ENCODE measurements at regions of chr1 and their contacts with region 1.

Region 1: DNA sequence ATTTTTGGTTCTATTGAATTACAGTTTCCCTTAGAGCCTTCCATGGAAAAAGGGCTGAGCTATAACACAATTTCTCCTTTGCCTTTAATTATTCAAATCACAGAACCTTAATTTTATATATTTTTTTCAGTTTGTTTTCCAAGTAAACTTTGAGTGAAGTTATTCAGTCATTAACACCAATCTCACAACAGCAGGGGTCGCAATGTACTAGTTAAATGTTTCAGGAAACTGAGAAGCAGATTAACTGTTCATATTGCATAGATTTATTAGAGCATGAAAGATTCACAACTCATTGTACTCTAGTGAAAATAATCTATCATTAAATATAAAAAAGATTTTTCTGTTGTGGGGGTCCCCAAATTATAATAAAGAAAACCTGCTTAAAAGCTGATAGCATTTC is 64.1 kb downstream of the KIFAP3 start:
- DNase-seq: peak in 3 of 4 experiments; percentile 9 to 73 (median 14)
- ATAC-seq: peak; percentile 53; the same call in 2 of the 3 replicates
- H3K4me3 ChIP-seq: no peak overlapping the region
- H3K27ac ChIP-seq: no peak overlapping the region
- H3K4me1 ChIP-seq: no peaks in the 10 kb centered on the region
- H3K27me3 ChIP-seq: no peaks in the 10 kb centered on the region
- CTCF ChIP-seq: peak in 2 of 3 experiments; percentile 30 to 72; a peak in 3 of 6 replicates
- EP300 ChIP-seq: no peak
- POLR2A ChIP-seq: no peak
- RAD21 ChIP-seq: peak; percentile 88 to 90

Region 2: DNA sequence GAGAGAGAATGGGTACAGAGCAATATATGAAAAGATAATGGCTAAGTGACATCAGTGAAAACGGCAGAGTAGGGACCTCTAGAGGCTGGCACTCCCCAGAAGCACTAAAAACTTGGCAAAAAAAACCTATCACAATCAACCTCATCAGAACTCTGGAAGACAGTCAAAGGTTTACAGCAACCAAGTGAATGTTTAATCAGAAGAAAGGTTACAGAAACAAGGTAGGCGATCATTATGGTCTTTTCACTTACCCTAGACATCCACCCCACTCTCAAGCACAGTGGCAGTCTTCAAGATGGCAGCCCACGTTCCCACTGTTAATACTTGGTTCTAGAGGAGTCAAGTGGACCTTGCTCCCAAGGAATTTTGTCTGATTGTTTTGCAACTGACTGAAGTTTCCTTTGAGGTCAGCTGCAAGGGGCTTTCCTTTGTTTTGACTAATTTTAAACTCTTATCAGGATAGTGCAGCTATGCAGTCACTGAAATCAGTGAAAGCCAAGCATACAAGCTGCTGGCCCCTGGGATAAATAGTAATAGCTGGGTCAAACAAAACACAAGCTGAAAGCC is 56.9 kb after region 1 on chr1:
- CTCF ChIA-PET with region 1: no interaction called
- POLR2A ChIA-PET with region 1: no interaction called
- in situ Hi-C with region 1: no loop called
- intact Hi-C with region 1: loop called (anchors 5 kb)
- DNase-seq: peak in 2 of 4 experiments; percentile 36 to 75
- ATAC-seq: peak; percentile 82
- H3K4me3 ChIP-seq: no peak overlapping the region
- H3K27ac ChIP-seq: peak overlapping the region; percentile 42; the same call in 1 of the 3 replicates
- H3K4me1 ChIP-seq: peaks cover 0 to 14% of the 10 kb centered on the region in 2 experiments; a peak in 2 of 5 replicates
- H3K27me3 ChIP-seq: no peaks in the 10 kb centered on the region
- CTCF ChIP-seq: peak in 2 of 3 experiments; percentile 21 to 40; a peak in 1 of 6 replicates
- EP300 ChIP-seq: peak; percentile 76
- POLR2A ChIP-seq: no peak
- RAD21 ChIP-seq: peak in 1 of 2 experiments; percentile 58; a peak in 3 of 4 replicates

Region 3: DNA sequence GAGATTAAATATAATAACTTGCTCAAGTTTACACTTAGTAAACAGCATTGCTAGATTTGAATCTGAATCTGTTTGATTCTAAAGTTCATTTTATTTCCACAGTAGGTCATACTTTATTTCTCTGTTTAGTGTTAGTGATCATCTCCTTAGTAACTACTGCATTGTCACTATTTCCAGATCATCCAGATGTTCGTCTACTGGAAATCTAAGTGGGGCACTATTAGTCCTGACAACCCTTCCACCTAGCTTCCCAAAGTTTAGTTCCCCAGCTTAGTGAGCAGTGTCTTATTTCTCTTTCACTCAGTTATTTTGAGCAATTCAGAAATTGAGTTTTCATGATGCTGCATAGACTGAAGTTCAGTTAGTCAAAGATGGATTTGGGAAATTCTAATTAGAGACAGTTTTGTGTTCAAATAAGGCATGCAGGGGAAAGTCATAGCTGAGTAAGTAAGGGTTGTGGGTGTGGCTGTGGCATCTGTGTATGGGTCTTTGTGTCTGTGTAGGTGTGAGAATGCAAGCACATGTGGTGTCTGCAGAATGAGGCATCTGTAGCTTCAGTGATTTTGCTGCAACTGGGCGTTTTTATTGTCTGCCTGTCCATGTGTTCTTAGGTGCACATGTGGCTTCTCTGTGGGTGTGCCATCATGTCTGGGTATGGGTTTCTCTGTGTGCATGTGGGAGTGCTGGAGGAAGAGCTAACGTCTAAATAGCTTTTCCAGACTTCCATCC is 242.6 kb after region 1 on chr1:
- CTCF ChIA-PET with region 1: no interaction called
- POLR2A ChIA-PET with region 1: no interaction called
- in situ Hi-C with region 1: no loop called
- intact Hi-C with region 1: loop called (anchors 10 kb)
- DNase-seq: no peak
- ATAC-seq: no peak
- H3K4me3 ChIP-seq: no peak overlapping the region
- H3K27ac ChIP-seq: no peak overlapping the region
- H3K4me1 ChIP-seq: no peaks in the 10 kb centered on the region
- H3K27me3 ChIP-seq: no peaks in the 10 kb centered on the region
- CTCF ChIP-seq: no peak
- EP300 ChIP-seq: no peak
- POLR2A ChIP-seq: no peak
- RAD21 ChIP-seq: no peak

Region 4: GRCh38 chr1:170402476-170403311 is 392.3 kb after region 1 on chr1:
- CTCF ChIA-PET with region 1: no interaction called
- POLR2A ChIA-PET with region 1: no interaction called
- in situ Hi-C with region 1: no loop called
- intact Hi-C with region 1: loop called (anchors 10 kb)
- DNase-seq: no peak
- ATAC-seq: no peak
- H3K4me3 ChIP-seq: no peak overlapping the region
- H3K27ac ChIP-seq: no peak overlapping the region
- H3K4me1 ChIP-seq: no peaks in the 10 kb centered on the region
- H3K27me3 ChIP-seq: no peaks in the 10 kb centered on the region
- CTCF ChIP-seq: no peak
- EP300 ChIP-seq: no peak
- POLR2A ChIP-seq: no peak
- RAD21 ChIP-seq: no peak

Region 5: DNA sequence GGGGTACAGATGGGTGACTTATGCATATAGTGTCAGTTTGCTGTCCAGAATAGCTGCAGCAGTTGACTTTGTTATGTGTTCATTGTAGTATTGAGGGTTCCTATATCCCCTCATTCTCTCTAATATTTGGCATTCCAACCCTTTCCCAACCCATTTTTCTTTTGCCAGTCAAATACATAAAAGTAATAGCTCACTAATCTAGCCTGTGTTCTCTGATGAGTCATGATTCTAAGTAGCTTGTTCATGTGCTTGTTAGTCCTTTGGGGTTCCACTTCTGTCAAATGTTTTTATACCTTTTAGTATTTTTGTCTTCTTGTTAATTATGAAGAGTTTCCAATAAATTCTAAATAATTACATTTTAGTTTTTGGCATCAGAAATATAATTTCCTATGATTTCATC is 825.7 kb after region 1 on chr1:
- CTCF ChIA-PET with region 1: no interaction called
- POLR2A ChIA-PET with region 1: no interaction called
- in situ Hi-C with region 1: no loop called
- intact Hi-C with region 1: no loop called
- DNase-seq: no peak
- ATAC-seq: no peak
- H3K4me3 ChIP-seq: no peak overlapping the region
- H3K27ac ChIP-seq: no peak overlapping the region
- H3K4me1 ChIP-seq: no peaks in the 10 kb centered on the region
- H3K27me3 ChIP-seq: no peaks in the 10 kb centered on the region
- CTCF ChIP-seq: no peak
- EP300 ChIP-seq: no peak
- POLR2A ChIP-seq: no peak
- RAD21 ChIP-seq: no peak

Region 6: DNA sequence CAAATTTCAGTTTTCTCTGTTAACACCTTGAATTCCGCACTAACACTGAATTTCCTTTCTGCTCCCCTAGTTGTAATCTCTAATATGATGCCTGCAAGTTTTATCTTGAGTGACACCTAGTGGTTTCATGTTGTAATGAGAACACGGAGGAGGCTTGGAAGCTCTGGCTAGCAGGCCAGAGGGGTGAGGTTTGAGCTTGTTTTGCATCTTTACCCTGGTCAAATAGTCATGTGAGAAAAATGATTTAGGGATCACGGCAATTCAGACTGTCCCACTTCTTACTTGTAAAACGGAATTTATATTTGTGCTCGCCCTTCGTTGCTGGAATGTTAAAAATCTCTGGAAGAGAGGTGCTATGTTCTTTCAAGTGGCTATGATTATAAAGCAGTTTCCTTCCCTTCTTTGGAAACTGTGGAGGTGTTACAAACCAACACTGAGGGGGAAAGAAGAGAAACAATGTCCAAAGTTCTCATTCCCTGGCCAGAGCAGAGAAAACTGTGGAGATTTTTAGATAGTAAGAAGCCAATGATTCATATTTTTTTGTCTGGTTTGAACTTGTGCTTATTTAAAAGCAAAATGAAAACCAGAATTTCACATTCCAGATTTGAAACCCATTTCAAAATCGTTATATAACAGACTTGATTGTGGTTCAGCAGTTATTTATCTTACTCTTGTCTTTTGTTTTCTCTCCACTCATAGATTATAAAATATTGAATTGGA is 919.6 kb after region 1 on chr1:
- CTCF ChIA-PET with region 1: interaction called, 3 read pairs
- POLR2A ChIA-PET with region 1: no interaction called
- in situ Hi-C with region 1: no loop called
- intact Hi-C with region 1: loop called (anchors 2 kb)
- DNase-seq: peak; percentile 41 to 58 (median 51)
- ATAC-seq: peak; percentile 91
- H3K4me3 ChIP-seq: no peak overlapping the region
- H3K27ac ChIP-seq: no peak overlapping the region
- H3K4me1 ChIP-seq: no peaks in the 10 kb centered on the region
- H3K27me3 ChIP-seq: no peaks in the 10 kb centered on the region
- CTCF ChIP-seq: peak; percentile 57 to 65 (median 65)
- EP300 ChIP-seq: no peak
- POLR2A ChIP-seq: no peak
- RAD21 ChIP-seq: peak; percentile 64 to 73

Measured in K562 (cell line).